Activated naive CD4-positive, alpha-beta T cell treated with anti-CD3 and anti-CD28 coated beads, Interleukin-2, amount 10 ng/mL, durations not matched to agents 7 days and 5 days (primary cell): ENCODE measurements at regions of chr7 and their contacts with region 1.

Region 1: GRCh38 chr7:111098011-111098925 is 7.3 kb downstream of the LRRN3 start:
- DNase-seq: peak; percentile 79
- H3K4me3 Mint-ChIP-seq: peak overlapping the region; percentile 99
- H3K27ac Mint-ChIP-seq: peak overlapping the region; percentile 82
- H3K4me1 Mint-ChIP-seq: peaks cover 72% of the 10 kb centered on the region
- H3K27me3 Mint-ChIP-seq: no peaks in the 10 kb centered on the region

Region 2: GRCh38 chr7:110595690-110596325 is 502.5 kb before region 1 on chr7:
- CTCF ChIA-PET with region 1: interaction called, 27 read pairs
- DNase-seq: no peak
- H3K4me3 Mint-ChIP-seq: no peak overlapping the region
- H3K27ac Mint-ChIP-seq: no peak overlapping the region
- H3K4me1 Mint-ChIP-seq: peaks cover 14% of the 10 kb centered on the region
- H3K27me3 Mint-ChIP-seq: peaks cover 3% of the 10 kb centered on the region

Region 3: GRCh38 chr7:111012799-111013675 is 85.2 kb before region 1 on chr7:
- CTCF ChIA-PET with region 1: no interaction called
- DNase-seq: peak; percentile 70
- H3K4me3 Mint-ChIP-seq: peak overlapping the region; percentile 70
- H3K27ac Mint-ChIP-seq: peak overlapping the region; percentile 95
- H3K4me1 Mint-ChIP-seq: peaks cover 70% of the 10 kb centered on the region
- H3K27me3 Mint-ChIP-seq: no peaks in the 10 kb centered on the region

Region 4: DNA sequence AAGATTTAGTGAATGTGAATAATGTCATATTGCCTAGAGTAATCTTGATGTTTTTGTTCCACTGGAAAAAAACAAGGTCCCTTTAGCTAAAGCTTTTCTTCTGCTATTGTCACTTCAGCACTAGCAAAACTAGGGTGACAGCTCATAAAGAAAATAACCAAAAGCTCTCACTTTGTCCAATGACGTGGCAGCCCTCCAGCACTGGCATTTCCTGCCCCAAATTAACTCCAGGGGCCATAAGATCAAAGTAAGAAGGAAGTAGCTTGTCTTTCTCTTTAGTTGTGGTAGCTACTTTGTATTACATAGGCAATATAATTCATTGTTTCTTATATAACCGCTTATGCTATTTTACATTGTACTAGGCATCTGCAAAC is 39.9 kb after region 1 on chr7:
- CTCF ChIA-PET with region 1: interaction called, 10 read pairs
- DNase-seq: peak; percentile 75
- H3K4me3 Mint-ChIP-seq: no peak overlapping the region
- H3K27ac Mint-ChIP-seq: peak overlapping the region; percentile 81
- H3K4me1 Mint-ChIP-seq: peaks cover 22% of the 10 kb centered on the region
- H3K27me3 Mint-ChIP-seq: no peaks in the 10 kb centered on the region